Sciatic nerve (tissue), 2 donors: ENCODE measurements at regions of chr15 and their contacts with region 1.

Region 1: DNA sequence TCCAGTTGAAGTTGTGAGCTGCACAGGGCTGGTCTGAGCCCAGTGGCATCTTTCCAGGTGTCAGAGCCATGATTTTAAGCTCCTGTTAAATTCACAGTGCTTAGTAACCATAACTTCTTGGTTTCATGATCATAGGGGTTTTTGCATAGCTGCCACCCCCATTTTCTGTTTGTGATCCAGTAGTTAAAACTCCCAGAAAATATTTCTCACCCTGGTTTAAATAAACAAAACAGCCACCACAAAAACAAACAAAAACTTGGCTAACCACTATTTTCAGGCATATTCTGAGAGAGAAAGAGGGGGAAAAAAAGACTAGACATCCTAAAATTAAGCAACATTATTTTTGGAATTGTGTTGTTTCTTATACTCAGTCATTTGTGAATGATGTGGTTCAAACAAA is 175.3 kb downstream of the IGF1R start:
- DNase-seq: no peak
- ATAC-seq: no peak

Region 2: DNA sequence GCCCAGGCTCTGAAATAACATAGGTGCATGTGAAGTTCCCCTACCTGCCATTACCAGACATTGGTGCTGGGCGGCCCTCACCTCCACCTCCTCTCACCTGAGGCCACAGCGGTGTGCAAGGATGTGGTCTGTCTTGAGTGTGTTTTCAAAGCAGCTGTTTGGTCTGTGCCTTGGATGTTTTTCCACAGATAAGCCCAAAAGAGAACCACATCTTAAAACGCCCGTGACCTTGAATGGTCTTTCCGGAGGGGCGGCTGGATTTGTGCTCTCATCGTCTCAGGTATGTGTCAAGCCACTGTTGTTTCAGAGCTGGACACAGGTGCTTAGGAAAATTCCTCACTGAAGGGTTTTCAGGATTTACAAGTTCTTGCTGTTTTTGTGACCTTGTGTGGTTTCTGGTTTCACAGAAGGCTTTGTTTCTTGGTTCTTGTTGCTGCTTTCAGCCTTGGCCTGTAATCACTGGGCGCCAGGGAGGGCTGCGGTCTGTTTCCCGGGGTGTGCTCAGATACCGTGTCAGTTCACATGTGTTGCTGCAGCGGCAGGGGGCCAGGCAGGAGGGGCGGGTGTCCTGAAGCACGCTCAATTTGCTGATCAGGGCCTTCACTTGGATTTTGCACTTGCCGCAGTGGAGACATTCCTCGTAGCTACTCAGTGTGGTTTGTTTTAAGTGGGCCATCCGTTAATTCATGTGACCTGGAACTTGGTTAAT is 46.9 kb before region 1 on chr15:
- intact Hi-C with region 1: loop called (anchors 1 kb)
- DNase-seq: peak; percentile 72
- ATAC-seq: peak; percentile 90

Region 3: DNA sequence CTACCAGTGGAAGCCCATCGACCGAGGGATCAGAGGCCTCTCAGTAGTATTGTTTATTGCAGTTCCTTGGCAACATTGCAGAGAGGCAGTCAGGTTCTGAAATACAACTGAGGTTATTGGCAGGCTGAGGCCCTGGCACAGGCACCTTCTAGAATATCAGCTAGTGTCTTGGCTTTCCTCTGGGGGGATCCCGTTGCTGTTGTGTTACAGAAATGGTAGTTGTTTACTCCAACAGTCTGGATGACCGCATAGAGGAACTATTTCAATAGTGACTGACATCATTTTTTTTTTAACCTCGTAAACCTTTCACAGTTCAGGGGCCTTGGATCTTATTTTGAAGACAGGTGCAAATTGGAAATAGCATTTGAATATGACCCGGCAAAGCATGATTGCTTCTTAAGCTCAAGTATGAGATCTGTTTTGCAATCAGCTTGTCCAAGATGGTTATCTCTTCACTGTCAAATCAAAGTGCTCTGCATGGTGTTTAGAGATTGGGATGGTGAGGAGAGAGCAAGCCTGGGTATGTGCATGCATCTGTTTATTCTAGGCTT is 120.1 kb after region 1 on chr15:
- intact Hi-C with region 1: no loop called
- DNase-seq: no peak
- ATAC-seq: peak; percentile 73